Kidney (tissue), 22 donors: ENCODE measurements at regions of chr3 and their contacts with region 1.

Region 1: GRCh38 chr3:194315088-194315964 is 35.8 kb downstream of the CPN2 start:
- DNase-seq: peak; percentile 92 to 97 (median 94)
- H3K4me3 ChIP-seq: peak overlapping the region; percentile 3 to 62 (median 3)
- H3K27ac ChIP-seq: peak overlapping the region in 1 of 2 donors; percentile 25
- H3K4me1 ChIP-seq: peaks cover 2 to 14% (median 14%) of the 10 kb centered on the region in 3 donors
- H3K27me3 ChIP-seq: no peaks in the 10 kb centered on the region
- CTCF ChIP-seq: peak; percentile 97

Region 2: GRCh38 chr3:193665370-193665989 is 649.8 kb before region 1 on chr3:
- intact Hi-C with region 1: loop called (anchors 10 kb)
- DNase-seq: peak in 2 of 5 donors; percentile 47 to 51
- H3K4me3 ChIP-seq: no peak overlapping the region
- H3K27ac ChIP-seq: no peak overlapping the region
- H3K4me1 ChIP-seq: no peaks in the 10 kb centered on the region
- H3K27me3 ChIP-seq: no peaks in the 10 kb centered on the region
- CTCF ChIP-seq: peak; percentile 30

Region 3: GRCh38 chr3:193788189-193788991 is 526.9 kb before region 1 on chr3:
- intact Hi-C with region 1: loop called (anchors 10 kb)
- DNase-seq: peak; percentile 73 to 92 (median 83)
- H3K4me3 ChIP-seq: no peak overlapping the region
- H3K27ac ChIP-seq: peak overlapping the region in 1 of 2 donors; percentile 3
- H3K4me1 ChIP-seq: peaks cover 0 to 3% (median 0%) of the 10 kb centered on the region in 3 donors
- H3K27me3 ChIP-seq: no peaks in the 10 kb centered on the region
- CTCF ChIP-seq: peak; percentile 76

Region 4: DNA sequence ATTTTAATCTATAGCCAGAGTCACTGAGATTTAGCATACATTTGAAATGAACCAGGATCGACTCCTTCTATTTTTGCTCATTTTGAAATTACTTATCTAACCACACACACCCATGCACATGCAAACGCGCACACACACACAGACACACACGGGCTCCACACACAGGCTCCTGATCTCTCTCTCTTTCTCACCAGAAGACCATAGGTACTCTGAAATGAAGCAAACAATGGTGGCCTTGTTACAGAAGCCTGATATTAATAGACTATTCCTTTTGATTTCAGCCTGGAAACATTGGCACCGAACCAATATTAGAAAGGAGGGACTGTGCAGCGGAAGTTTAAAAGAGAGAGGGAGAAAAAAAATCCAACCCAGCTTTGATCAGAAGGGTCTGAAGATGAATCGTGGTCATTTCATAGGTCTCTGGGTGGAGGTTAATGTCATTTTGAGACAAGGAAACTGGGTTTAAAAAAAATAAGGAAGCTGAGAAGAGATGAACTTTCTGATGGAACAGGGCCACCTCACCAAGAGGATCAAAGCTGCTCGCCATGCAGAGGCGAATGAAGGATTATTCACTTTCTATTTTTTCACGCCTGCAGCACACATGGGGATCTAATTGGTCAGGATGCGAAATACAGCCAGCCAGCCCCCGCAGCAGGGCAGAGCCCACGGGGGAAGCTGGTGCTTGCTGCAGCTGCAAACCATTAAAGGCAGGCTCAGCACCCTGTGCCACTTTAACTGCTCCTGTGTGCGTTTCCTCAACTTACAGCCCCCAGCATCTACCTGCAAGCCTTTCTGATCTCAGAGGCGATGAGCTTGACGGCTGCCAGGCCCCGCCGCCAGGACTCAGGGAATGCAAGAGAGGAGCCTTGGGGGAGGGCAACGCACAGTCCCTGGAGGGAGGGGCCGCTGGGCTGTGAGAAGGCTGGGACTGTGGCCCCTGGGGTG is 90.6 kb before region 1 on chr3:
- intact Hi-C with region 1: no loop called
- DNase-seq: peak in 3 of 5 donors; percentile 55 to 73 (median 66)
- H3K4me3 ChIP-seq: no peak overlapping the region
- H3K27ac ChIP-seq: no peak overlapping the region
- H3K4me1 ChIP-seq: no peaks in the 10 kb centered on the region
- H3K27me3 ChIP-seq: no peaks in the 10 kb centered on the region
- CTCF ChIP-seq: no peak

Region 5: DNA sequence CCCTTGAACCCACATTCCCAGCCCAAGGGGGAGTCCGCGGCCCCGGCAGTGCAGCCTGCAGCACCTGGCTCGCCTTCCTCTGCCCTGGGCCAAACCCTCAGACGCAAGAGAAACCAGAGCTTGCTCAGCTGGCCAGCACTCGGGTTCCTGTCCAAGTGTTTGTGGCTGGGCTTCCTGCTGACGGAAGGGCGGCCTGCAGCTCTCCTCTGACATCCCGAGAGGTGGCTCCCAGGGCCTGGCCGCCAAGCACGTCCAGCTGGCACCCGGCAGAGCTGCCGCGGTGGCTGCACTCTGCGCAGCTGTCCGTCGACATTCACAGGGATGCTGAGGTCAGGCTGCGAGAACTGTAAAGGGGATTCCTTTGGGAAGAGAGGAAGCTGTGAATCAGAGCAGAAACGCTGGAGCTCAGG is 49.8 kb before region 1 on chr3:
- intact Hi-C with region 1: no loop called
- DNase-seq: peak; percentile 69 to 92 (median 80)
- H3K4me3 ChIP-seq: no peak overlapping the region
- H3K27ac ChIP-seq: peak overlapping the region in 1 of 2 donors; percentile 52
- H3K4me1 ChIP-seq: peaks cover 0 to 18% (median 11%) of the 10 kb centered on the region in 3 donors
- H3K27me3 ChIP-seq: no peaks in the 10 kb centered on the region
- CTCF ChIP-seq: no peak